ENCODE measurements at regions of chr2 and their contacts with region 1.

Region 1: DNA sequence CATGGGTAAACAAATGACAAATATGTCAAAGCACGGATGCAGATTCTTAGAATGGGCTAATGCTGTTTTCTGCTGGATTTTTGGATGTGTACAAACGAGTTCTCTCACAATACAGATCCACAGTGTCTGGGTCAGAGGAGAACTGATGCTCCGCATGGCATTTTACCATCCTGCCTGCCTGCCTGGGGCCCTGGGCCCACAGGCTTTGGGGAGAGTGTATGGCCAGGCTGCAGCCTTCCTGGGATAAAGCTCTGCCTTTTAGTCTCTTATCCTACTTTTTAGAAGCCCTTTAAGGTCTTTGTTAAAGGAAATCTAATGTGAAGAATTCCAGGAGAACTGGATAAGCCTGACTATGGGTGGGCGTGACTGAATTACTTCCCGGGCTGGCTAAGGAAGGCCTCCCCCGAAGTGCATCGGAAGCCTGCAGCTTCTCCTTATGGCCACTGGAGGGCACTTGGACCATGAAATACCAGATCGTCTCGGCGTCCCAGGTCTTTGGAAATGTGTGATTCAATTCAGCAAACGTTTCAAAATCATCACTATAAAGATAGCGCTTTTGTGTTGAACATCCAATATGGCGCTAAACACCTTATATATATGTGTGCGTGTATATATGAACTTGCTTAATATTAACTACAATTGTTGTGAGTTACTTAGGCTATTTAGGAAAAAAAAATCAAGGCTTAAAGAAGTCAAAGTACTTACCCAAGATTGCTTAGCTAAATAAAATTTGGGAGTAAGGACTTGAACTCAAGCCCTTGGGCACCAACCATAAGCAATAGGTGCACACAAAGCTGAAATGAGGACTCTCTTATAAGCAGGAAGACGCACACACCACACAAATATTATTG is 15.2 kb upstream of the DNPEP start:
- DNase-seq: peak; percentile 87
- H3K4me3 ChIP-seq: no peak overlapping the region; a peak in 1 of 4 replicates
- H3K27ac ChIP-seq: no peak overlapping the region
- H3K4me1 ChIP-seq: peaks cover 20 to 22% of the 10 kb centered on the region in 2 experiments; a peak in 3 of 4 replicates
- H3K27me3 ChIP-seq: no peaks in the 10 kb centered on the region
- CTCF ChIP-seq: peak; percentile 97
- EP300 ChIP-seq: no peak
- RAD21 ChIP-seq: peak; percentile 96

Region 2: GRCh38 chr2:219229305-219230058 is 173.4 kb before region 1 on chr2 and contains the starts of genes ANKZF1 and ATG9A:
- CTCF ChIA-PET with region 1: no interaction called
- POLR2A ChIA-PET with region 1: no interaction called
- DNase-seq: peak; percentile 98
- H3K4me3 ChIP-seq: peak within 1 kb of the TSS; percentile 82 to 87
- H3K27ac ChIP-seq: peak within 1 kb of the TSS; percentile 74 to 77
- H3K4me1 ChIP-seq: peaks cover 3 to 16% of the 10 kb centered on the region in 2 experiments; a peak in 1 of 4 replicates
- H3K27me3 ChIP-seq: no peaks in the 10 kb centered on the region
- CTCF ChIP-seq: no peak
- EP300 ChIP-seq: no peak
- RAD21 ChIP-seq: no peak
- polyA plus RNA-seq, gene ANKZF1: 22.3 and 30.8 TPM in 2 replicates
- polyA plus RNA-seq, gene ATG9A: 29.6 and 33.2 TPM in 2 replicates

Region 3: DNA sequence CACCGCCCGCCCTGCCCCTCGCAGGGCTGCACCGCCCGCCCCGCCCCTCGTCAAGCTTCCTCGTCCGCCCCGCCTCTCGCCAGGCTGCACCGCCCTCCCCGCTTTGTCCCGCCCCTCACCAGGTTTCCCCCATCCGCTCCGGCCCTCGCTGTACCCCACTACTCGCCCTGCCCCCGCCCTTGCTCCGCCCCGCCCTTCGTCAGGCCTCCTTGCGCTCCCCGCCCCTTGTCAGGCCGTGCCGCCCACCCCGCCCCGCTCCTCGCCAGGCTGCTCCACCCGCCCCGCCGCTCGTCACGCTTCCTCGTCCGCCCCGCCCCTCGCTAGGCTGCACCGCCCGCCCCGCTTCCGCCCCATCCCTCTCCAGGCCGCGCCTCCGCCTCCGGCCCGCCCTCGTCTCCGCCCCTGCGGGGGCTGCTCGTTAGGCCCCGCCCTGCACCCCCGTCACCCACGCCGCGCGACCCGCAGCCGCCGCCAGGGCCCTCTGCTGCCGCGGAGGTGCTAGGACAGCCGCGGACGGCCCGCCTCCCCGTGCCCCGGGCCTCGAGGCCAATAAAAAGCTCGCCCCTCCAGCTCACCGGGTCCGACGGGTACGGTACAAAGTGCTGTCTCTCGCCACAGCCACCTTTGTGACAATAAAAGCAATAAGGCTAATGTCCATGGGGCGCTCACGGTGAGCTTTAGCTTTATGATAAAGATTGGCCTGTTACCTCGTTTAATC is 14.6 kb before region 1 on chr2:
- CTCF ChIA-PET with region 1: interaction called, 51 read pairs
- POLR2A ChIA-PET with region 1: interaction called, 3 read pairs
- DNase-seq: peak; percentile 99
- H3K4me3 ChIP-seq: peak overlapping the region in 1 of 2 experiments; percentile 43; a peak in 2 of 4 replicates
- H3K27ac ChIP-seq: peak overlapping the region; percentile 43 to 75; a peak in 3 of 4 replicates
- H3K4me1 ChIP-seq: peaks cover 3 to 16% of the 10 kb centered on the region in 2 experiments; a peak in 1 of 4 replicates
- H3K27me3 ChIP-seq: no peaks in the 10 kb centered on the region
- CTCF ChIP-seq: peak; percentile 64
- EP300 ChIP-seq: no peak
- RAD21 ChIP-seq: no peak

Region 4: GRCh38 chr2:219452838-219453317 is 50.0 kb after region 1 on chr2:
- CTCF ChIA-PET with region 1: interaction called, 29 read pairs
- POLR2A ChIA-PET with region 1: interaction called, 4 read pairs
- DNase-seq: peak; percentile 63
- H3K4me3 ChIP-seq: no peak overlapping the region
- H3K27ac ChIP-seq: peak overlapping the region; percentile 90 to 98
- H3K4me1 ChIP-seq: peaks cover 29 to 35% of the 10 kb centered on the region in 2 experiments
- H3K27me3 ChIP-seq: no peaks in the 10 kb centered on the region
- CTCF ChIP-seq: no peak
- EP300 ChIP-seq: peak in 1 of 2 experiments; percentile 96; a peak in 2 of 4 replicates
- RAD21 ChIP-seq: no peak

Region 5: GRCh38 chr2:219484343-219485200 is 81.7 kb after region 1 on chr2:
- CTCF ChIA-PET with region 1: interaction called, 11 read pairs
- POLR2A ChIA-PET with region 1: no interaction called
- DNase-seq: no peak
- H3K4me3 ChIP-seq: no peak overlapping the region
- H3K27ac ChIP-seq: no peak overlapping the region
- H3K4me1 ChIP-seq: no peaks in the 10 kb centered on the region
- H3K27me3 ChIP-seq: no peaks in the 10 kb centered on the region
- CTCF ChIP-seq: no peak
- EP300 ChIP-seq: no peak
- RAD21 ChIP-seq: no peak

Region 6: GRCh38 chr2:219530048-219530963 is 127.4 kb after region 1 on chr2:
- CTCF ChIA-PET with region 1: interaction called, 256 read pairs
- POLR2A ChIA-PET with region 1: interaction called, 3 read pairs
- DNase-seq: peak; percentile 93
- H3K4me3 ChIP-seq: peak overlapping the region; percentile 28 to 36; a peak in 3 of 4 replicates
- H3K27ac ChIP-seq: peak overlapping the region in 1 of 2 experiments; percentile 12; a peak in 1 of 4 replicates
- H3K4me1 ChIP-seq: peaks cover 0 to 38% of the 10 kb centered on the region in 2 experiments; a peak in 2 of 4 replicates
- H3K27me3 ChIP-seq: no peaks in the 10 kb centered on the region; the same call in 1 of the 2 replicates
- CTCF ChIP-seq: peak; percentile 91
- EP300 ChIP-seq: no peak
- RAD21 ChIP-seq: peak; percentile 99

Region 7: DNA sequence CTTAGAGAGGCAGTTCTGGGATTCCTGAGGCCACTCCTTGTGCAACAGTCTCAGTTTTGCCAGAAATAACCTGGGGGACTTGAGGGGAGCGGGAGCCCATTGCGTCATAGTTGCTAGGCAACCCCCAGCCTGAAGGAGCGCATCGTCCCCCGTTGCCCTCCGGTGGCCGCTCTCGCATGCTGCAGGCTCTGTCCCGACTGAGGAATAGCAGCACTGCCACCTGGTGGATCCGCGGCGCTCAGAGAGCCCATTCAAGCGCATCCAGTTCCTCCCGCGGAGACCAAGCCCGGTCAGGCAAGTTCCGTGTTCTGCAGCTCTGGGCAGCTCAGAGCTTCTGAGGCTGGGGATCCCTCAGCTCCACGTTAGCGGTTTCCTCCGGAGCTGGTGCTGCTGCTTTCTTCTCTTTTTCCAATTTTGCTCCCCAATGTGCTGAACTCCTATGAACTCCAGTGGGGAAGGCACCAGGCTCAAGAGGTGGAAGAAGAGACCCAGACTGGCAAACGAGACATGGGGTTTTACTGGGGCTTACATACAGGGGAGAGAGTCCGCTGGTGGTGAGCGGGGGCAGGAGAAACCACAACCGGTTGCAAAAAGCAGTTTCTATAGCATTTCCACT is 239.7 kb after region 1 on chr2:
- CTCF ChIA-PET with region 1: interaction called, 19 read pairs
- POLR2A ChIA-PET with region 1: no interaction called
- DNase-seq: peak; percentile 95
- H3K4me3 ChIP-seq: peak overlapping the region in 1 of 2 experiments; percentile 39; a peak in 1 of 4 replicates
- H3K27ac ChIP-seq: no peak overlapping the region
- H3K4me1 ChIP-seq: peaks cover 13 to 20% of the 10 kb centered on the region in 2 experiments; a peak in 3 of 4 replicates
- H3K27me3 ChIP-seq: no peaks in the 10 kb centered on the region; the same call in 1 of the 2 replicates
- CTCF ChIP-seq: peak; percentile 98
- EP300 ChIP-seq: no peak
- RAD21 ChIP-seq: peak; percentile 93

Region 8: DNA sequence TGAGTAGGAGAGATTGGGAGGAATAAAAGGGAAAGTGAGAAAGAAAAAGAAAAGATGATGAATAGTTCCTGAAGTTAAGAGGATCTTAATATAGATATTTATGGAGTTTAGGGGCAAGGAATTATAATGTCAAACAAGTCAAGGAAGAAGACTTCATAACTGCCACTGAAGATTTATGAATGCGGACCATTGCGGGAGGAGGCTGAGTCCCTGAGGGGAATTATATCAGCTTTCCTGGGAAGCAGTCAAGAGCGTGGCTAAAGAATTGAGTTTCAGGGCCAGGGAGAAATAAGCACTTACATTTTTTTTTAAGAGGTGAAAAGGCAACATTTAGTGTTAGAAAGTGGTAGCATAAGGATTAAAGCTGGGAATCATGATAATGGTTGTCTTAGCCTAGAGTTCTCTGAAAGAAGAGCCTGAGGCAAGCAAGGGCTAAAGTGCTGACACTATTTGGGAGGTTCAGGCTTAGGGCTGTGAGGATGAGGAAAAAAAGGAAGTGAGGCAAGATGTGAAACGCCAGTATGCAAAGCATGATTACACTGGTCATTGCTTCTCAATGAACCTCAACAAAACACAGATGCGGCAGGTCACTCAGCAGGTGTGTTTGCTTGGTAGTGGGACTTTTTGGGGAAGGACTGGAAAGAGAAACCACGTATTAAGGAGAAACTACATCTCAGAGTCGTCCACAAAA is 441.7 kb after region 1 on chr2:
- CTCF ChIA-PET with region 1: no interaction called
- POLR2A ChIA-PET with region 1: no interaction called
- DNase-seq: no peak
- H3K4me3 ChIP-seq: no peak overlapping the region
- H3K27ac ChIP-seq: no peak overlapping the region
- H3K4me1 ChIP-seq: no peaks in the 10 kb centered on the region
- H3K27me3 ChIP-seq: no peaks in the 10 kb centered on the region; the same call in 1 of the 2 replicates
- CTCF ChIP-seq: no peak
- EP300 ChIP-seq: no peak
- RAD21 ChIP-seq: no peak

Measured in SK-N-SH (cell line).